Posterior vena cava (tissue), 2 donors: ENCODE measurements at regions of chrX and their contacts with region 1.

Region 1: DNA sequence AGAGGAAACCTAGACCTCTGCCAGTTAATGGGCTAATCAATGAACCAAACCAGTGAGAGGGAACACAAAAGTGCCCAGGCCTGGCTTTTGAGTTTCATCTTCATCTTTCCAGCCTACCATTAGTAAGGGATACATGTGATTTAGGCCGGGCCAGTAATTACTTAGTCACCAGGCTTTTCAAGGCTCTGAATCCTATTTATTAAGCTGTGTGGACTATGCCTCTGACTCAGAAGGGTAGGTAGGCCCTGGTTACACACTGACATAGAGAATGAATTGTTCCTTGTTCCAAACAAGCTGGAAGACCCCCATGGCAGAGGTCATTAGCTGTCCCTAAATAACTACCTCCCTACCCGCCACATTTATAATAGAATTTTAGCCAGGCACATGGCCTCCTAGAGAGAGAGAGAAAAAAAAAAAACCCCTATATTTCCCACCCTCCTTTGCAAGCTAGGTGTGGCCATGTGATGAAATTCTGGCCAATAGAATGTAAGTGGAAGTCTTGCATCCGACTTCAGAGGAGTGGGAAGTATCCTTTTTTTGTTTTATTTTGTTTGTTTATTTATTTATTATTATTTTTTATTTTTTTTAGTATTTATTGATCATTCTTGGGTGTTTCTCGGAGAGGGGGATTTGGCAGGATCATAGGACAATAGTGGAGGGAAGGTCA is 112.3 kb upstream of the BCOR start:
- DNase-seq: no peak

Region 2: DNA sequence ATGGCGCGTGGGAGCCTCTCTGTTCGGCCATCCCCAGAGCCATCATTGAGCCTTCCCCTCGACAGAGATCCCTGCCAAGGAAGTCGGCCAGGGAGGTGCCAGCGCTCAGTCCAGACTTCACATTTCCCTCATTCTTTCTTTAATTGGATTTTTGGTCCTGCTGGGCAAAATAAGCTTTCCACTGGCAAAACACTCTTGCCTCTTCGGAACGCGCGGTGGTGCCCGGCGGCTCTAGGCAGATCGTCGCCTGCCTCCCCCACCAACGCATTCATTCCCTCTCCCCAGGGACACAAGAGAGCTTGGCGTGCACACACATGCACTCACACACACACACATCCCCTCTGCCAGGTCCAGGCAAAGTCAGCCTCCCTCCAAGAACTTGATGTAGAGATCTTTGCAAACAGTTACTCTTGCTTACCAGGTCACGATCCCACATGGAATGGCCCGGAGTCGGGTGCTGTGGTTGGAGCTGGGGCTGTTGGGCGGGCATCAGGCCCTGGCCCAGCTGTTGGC is 369.4 kb before region 1 on chrX:
- intact Hi-C with region 1: loop called in 1 of 2 experiments (anchors 5 kb)
- DNase-seq: no peak